IMR-90 (cell line): ENCODE measurements at regions of chr7 and their contacts with region 1.

Region 1: GRCh38 chr7:156751319-156751718 is 110.7 kb downstream of the RNF32 start:
- DNase-seq: peak; percentile 97
- ATAC-seq: peak; percentile 82
- H3K4me3 ChIP-seq: no peak overlapping the region
- H3K27ac ChIP-seq: peak overlapping the region; percentile 51; the same call in 1 of the 2 replicates
- H3K4me1 ChIP-seq: peaks cover 22% of the 10 kb centered on the region
- H3K27me3 ChIP-seq: no peaks in the 10 kb centered on the region
- CTCF ChIP-seq: no peak
- POLR2A ChIP-seq: no peak
- RAD21 ChIP-seq: no peak

Region 2: DNA sequence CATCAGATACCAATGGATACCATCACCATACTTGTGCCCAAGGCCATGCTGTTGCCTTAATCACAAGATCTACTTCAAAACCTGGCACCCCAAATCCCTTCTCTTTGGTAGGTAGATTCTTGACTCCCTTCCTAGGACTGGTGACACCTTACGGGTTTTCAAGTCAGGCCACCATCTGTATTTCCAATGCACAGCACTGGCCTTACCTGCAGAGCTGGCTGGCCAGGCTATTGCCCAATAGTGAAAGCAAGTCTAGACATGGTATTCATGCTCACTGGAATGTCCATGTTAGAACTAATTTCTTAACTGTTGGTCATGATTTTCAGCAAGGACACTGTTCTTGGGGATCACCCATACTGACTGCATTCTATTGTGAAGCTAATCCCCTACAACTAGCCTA is 423.9 kb before region 1 on chr7:
- CTCF ChIA-PET with region 1: no interaction called
- POLR2A ChIA-PET with region 1: no interaction called
- dilution Hi-C with region 1: no loop called
- in situ Hi-C with region 1: no loop called
- intact Hi-C with region 1: no loop called
- DNase-seq: no peak
- ATAC-seq: no peak
- H3K4me3 ChIP-seq: no peak overlapping the region
- H3K27ac ChIP-seq: no peak overlapping the region
- H3K4me1 ChIP-seq: no peaks in the 10 kb centered on the region
- H3K27me3 ChIP-seq: no peaks in the 10 kb centered on the region
- CTCF ChIP-seq: no peak
- POLR2A ChIP-seq: no peak
- RAD21 ChIP-seq: no peak

Region 3: GRCh38 chr7:156473476-156474240 is 277.7 kb before region 1 on chr7:
- CTCF ChIA-PET with region 1: no interaction called
- POLR2A ChIA-PET with region 1: no interaction called
- dilution Hi-C with region 1: no loop called
- in situ Hi-C with region 1: no loop called
- intact Hi-C with region 1: loop called (anchors 10 kb)
- DNase-seq: peak; percentile 19
- ATAC-seq: peak; percentile 25; the same call in 1 of the 2 replicates
- H3K4me3 ChIP-seq: no peak overlapping the region
- H3K27ac ChIP-seq: no peak overlapping the region
- H3K4me1 ChIP-seq: peaks cover 11% of the 10 kb centered on the region
- H3K27me3 ChIP-seq: no peaks in the 10 kb centered on the region
- CTCF ChIP-seq: peak; percentile 58
- POLR2A ChIP-seq: no peak
- RAD21 ChIP-seq: peak; percentile 42

Region 4: DNA sequence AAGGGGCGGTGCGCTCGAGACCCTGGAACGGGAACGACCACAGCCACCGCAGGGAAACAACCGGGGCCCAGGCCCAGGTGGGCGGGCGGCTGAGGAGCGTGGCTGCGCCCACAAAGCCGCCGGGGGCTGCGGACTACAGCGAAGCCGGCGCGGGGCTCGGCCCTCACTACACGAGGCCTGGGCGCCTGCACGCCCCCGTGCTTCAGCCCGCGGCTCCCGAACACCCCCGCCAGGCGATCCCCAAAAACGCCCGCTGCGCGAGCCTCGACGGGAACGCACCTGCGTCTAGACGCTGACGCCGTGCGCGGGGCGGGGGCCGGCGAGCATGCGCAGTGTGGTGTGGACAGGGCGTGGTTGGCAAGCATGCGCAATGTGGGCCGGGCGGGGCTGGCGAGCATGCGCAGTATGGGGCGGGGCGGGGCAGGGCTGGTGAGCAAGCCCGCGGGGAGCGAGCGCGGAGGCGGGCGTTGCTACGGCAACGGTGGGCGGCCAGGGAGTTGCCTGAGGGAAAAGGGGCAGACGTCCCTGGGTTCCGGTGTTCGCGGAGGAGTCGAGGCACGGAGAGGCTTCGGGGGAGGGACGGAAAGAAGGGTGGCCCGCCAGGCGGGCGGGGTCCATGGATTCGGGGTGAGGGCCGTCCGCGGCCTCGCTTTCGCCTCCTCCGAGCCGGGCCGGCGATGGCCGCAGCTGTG is 110.9 kb before region 1 on chr7 and contains the start of gene RNF32:
- CTCF ChIA-PET with region 1: no interaction called
- POLR2A ChIA-PET with region 1: no interaction called
- dilution Hi-C with region 1: no loop called
- in situ Hi-C with region 1: no loop called
- intact Hi-C with region 1: loop called (anchors 2 kb)
- DNase-seq: peak; percentile 86
- ATAC-seq: peak; percentile 96
- H3K4me3 ChIP-seq: peak within 1 kb of the TSS; percentile 85
- H3K27ac ChIP-seq: peak within 1 kb of the TSS; percentile 72
- H3K4me1 ChIP-seq: peaks cover 2% of the 10 kb centered on the region; the same call in 1 of the 2 replicates
- H3K27me3 ChIP-seq: no peaks in the 10 kb centered on the region
- CTCF ChIP-seq: no peak
- POLR2A ChIP-seq: peak; percentile 63; the same call in 1 of the 2 replicates
- RAD21 ChIP-seq: no peak
- total RNA-seq, gene RNF32: 0.36 and 0.56 TPM in 2 replicates

Region 5: GRCh38 chr7:156764016-156764669 is 12.8 kb after region 1 on chr7:
- CTCF ChIA-PET with region 1: interaction called, 3 read pairs
- POLR2A ChIA-PET with region 1: interaction called, 10 read pairs
- dilution Hi-C with region 1: no loop called
- in situ Hi-C with region 1: no loop called
- intact Hi-C with region 1: no loop called
- DNase-seq: peak; percentile 78
- ATAC-seq: peak; percentile 100
- H3K4me3 ChIP-seq: no peak overlapping the region
- H3K27ac ChIP-seq: no peak overlapping the region
- H3K4me1 ChIP-seq: no peaks in the 10 kb centered on the region
- H3K27me3 ChIP-seq: no peaks in the 10 kb centered on the region
- CTCF ChIP-seq: peak; percentile 89
- POLR2A ChIP-seq: 0 out of 2 replicates have a peak, but pooled peaks have one; percentile 38
- RAD21 ChIP-seq: peak; percentile 96